ENCODE measurements at regions of chr7 and their contacts with region 1.

Region 1: GRCh38 chr7:64183126-64183742 is 23.8 kb upstream of the ZNF735 start:
- DNase-seq: no peak
- H3K4me3 Mint-ChIP-seq: no peak overlapping the region
- H3K27ac Mint-ChIP-seq: no peak overlapping the region
- H3K4me1 Mint-ChIP-seq: no peaks in the 10 kb centered on the region
- H3K27me3 Mint-ChIP-seq: no peaks in the 10 kb centered on the region

Region 2: DNA sequence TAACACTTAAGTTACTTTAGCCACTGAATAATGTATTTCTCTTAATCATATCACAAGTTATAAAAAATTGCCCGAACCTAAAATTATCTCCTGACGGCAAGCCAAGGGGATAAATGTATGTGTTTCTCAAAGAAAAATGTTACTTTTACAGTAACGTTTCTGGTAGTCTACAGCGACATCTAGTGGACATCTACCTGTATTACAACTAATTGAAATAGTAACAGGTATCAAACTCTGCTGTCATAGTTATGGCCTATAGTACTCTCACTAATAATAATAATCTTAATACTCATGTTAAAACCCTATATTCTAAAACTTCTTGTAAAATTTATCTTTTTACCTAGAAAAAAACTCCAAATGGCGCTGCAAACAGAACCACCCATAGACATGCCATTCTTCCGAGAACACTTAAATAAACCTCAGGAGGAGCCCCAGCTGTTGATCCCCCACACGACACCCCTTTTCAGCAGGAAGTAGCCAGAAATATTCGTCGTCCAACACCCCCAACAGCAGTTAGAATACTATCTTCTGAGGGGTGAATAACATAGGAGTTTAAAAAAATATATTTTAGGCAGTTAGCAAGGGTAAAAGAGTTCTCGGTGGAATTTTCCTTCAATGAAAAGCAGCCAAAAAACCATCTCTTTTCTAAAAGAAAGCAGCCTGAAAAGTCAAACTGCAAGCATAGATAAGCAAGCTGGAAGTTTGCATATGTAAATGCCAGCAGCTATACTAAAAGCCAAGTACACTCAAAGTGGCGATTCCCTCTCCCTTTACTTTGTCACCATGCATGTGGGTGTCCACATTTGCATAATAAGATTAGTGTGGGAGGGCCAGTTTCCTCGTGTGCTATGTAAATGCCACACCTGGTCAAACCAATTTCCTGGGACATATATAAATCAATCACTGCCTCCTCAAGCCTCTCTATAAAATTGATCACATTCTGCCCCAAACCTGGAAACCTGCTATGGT is 442.2 kb after region 1 on chr7:
- intact Hi-C with region 1: loop called (anchors 5 kb)
- DNase-seq: no peak
- H3K4me3 Mint-ChIP-seq: no peak overlapping the region
- H3K27ac Mint-ChIP-seq: no peak overlapping the region
- H3K4me1 Mint-ChIP-seq: no peaks in the 10 kb centered on the region
- H3K27me3 Mint-ChIP-seq: no peaks in the 10 kb centered on the region

Measured in activated T-helper 2 cell treated with anti-CD3 and anti-CD28 coated beads, Interferon-gamma antibody, Interleukin-2, Interleukin-4, amounts not matched to agents 10 μg/mL and 5 μg/mL and 100 μg/mL, durations not matched to agents 14 hours and 24 hours and 36 hours (primary cell).